ENCODE measurements at regions of chr3 and their contacts with region 1.

Region 1: GRCh38 chr3:27467545-27467944 is 16.6 kb downstream of the SLC4A7 start:
- DNase-seq: no peak
- H3K4me3 ChIP-seq: no peak overlapping the region
- H3K27ac ChIP-seq: peak overlapping the region in 1 of 2 donors; percentile 30
- H3K4me1 ChIP-seq: no peaks in the 10 kb centered on the region
- H3K27me3 ChIP-seq: no peaks in the 10 kb centered on the region
- CTCF ChIP-seq: peak; percentile 22 to 55 (median 35)

Region 2: DNA sequence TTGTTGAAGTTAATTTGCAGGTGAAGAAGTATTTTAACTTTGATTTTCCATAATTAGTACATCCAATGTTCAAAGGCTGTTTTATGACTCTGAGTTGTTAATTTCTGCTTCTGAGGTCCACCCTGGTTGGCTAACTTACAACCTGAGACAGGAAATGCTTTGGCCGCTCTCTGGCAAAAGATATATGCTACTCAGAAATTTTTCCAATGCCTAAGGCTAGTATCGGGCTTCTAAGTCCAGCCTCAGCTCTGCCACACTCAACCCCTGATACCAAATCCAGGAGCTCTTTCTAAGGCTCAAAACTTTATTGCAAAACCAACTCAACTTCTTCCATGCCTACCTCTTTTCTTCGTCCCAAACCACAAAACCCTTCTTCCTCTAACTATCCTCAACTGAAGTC is 291.3 kb before region 1 on chr3:
- intact Hi-C with region 1: no loop called
- DNase-seq: no peak
- H3K4me3 ChIP-seq: no peak overlapping the region
- H3K27ac ChIP-seq: no peak overlapping the region
- H3K4me1 ChIP-seq: no peaks in the 10 kb centered on the region
- H3K27me3 ChIP-seq: no peaks in the 10 kb centered on the region
- CTCF ChIP-seq: no peak

Region 3: DNA sequence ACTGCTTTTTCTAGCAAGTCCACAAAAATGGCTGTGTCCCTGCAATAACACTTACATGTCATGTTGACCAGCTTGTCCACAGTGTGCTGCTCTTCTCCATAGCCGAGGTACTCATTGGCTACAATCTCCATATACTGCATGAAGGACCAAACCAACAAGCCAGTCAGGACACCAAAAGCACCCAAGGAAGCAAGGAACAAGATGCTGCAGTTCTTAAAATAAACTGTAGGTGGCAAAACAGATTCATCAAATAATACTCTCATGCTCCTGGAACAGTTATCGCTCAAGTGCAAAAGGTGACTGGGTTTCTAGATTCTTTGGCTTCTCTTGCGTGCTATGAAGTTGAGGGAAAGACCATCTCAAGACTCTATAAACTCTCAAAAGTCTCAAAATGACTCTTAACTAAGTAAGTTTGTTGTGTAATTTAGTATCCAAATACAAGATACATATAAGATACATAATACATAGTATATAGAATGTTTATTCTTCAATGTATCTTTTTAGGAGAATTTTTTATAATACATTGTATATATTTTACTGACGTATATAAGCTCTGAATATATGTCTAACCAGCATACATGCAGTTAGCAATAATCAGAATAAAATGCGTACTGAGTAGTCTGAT is 155.4 kb before region 1 on chr3:
- intact Hi-C with region 1: loop called (anchors 5 kb)
- DNase-seq: no peak
- H3K4me3 ChIP-seq: no peak overlapping the region
- H3K27ac ChIP-seq: no peak overlapping the region
- H3K4me1 ChIP-seq: no peaks in the 10 kb centered on the region
- H3K27me3 ChIP-seq: no peaks in the 10 kb centered on the region
- CTCF ChIP-seq: peak; percentile 65 to 83 (median 75)

Measured in ascending aorta (tissue), 2 donors.